H1 (cell line): ENCODE measurements at regions of chr1 and their contacts with region 1.

Region 1: DNA sequence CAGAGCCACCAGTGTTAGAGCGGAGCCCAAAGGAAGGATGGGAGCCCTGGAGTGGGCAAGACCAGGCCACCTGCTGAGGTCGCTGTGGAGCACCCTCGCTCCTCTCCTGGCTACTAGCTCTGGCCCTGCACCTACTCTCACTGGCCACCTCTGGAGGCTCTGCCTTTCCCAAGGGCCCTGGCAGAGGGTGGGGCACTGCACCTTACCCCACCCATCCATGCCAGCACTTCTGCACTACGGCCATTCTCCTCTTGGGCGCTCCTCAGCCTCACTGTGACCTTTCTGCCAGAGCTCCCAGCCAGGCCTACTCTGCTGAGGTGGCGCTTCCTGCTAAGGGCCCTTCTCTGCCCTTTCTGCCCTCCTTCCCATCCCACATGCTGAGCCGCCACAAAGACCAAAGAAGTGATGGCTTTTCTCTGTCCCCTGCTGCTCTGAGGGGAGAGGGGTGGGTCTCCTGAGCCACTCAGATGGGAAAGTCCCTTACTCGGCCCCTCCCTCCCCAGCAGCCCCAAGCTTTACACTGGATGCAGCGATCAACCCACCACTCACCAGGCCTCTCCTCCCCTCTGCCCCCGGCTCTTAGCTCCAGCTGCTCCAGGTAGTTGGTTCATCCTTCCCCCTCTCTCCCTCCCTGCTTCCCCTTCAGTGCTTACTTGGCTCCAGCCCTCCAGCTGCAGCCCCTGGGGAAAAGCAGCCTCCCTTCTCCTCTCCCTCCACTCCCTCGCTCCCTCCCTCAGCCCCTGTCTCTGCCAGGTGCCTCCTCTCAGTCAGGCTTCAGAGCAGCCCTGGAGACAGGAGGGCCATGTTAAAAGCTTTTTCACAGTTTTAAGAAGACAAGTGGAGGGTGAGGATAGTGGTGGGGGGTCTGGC is 14.8 kb upstream of the TMEM222 start:
- DNase-seq: peak in 1 of 2 experiments; percentile 76
- H3K4me3 ChIP-seq: peak overlapping the region in 2 of 4 experiments; percentile 23 to 39; a peak in 4 of 8 replicates
- H3K27ac ChIP-seq: peak overlapping the region; percentile 57; the same call in 1 of the 2 replicates
- H3K4me1 ChIP-seq: peaks cover 11 to 15% (median 13%) of the 10 kb centered on the region in 4 experiments
- H3K27me3 ChIP-seq: no peaks in the 10 kb centered on the region
- CTCF ChIP-seq: peak; percentile 33 to 57 (median 41)
- EP300 ChIP-seq: no peak
- POLR2A ChIP-seq: 0 out of 3 replicates have a peak, but pooled peaks of 1 of the 2 experiments have one; percentile 28
- RAD21 ChIP-seq: 0 out of 4 replicates have a peak, but pooled peaks of 1 of the 2 experiments have one; percentile 12

Region 2: GRCh38 chr1:27166351-27166802 is 140.8 kb before region 1 on chr1:
- CTCF ChIA-PET with region 1: no interaction called
- POLR2A ChIA-PET with region 1: no interaction called
- DNase-seq: no peak
- H3K4me3 ChIP-seq: no peak overlapping the region
- H3K27ac ChIP-seq: no peak overlapping the region
- H3K4me1 ChIP-seq: no peaks in the 10 kb centered on the region
- H3K27me3 ChIP-seq: no peaks in the 10 kb centered on the region
- CTCF ChIP-seq: no peak
- EP300 ChIP-seq: no peak
- POLR2A ChIP-seq: no peak
- RAD21 ChIP-seq: no peak

Region 3: DNA sequence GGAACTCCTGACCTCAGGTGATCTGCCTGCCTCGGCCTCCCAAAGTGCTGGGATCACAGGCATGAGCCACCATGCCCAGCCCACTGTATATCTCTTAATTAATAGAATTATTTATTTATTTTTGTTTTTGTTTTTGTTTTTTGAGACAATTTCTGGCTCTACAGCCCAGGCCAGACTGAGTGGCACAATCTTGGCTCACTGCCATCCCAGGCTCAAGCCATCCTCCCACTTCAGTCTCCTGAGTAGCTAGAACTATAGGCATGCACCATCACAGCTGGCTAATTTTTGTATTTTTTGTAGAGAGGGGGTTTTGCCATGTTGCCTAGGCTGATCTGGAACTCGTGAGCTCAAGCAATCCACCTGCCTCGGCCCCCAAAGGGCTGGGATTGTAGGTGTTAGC is 88.4 kb before region 1 on chr1:
- CTCF ChIA-PET with region 1: no interaction called
- POLR2A ChIA-PET with region 1: no interaction called
- DNase-seq: no peak
- H3K4me3 ChIP-seq: no peak overlapping the region
- H3K27ac ChIP-seq: no peak overlapping the region
- H3K4me1 ChIP-seq: no peaks in the 10 kb centered on the region
- H3K27me3 ChIP-seq: no peaks in the 10 kb centered on the region
- CTCF ChIP-seq: no peak
- EP300 ChIP-seq: no peak
- POLR2A ChIP-seq: no peak
- RAD21 ChIP-seq: no peak

Region 4: GRCh38 chr1:27321813-27322577 is 14.9 kb after region 1 on chr1 and contains the start of gene TMEM222:
- CTCF ChIA-PET with region 1: interaction called, 202 read pairs
- POLR2A ChIA-PET with region 1: interaction called, 12 read pairs
- DNase-seq: peak; percentile 88 to 99
- H3K4me3 ChIP-seq: peak within 1 kb of the TSS; percentile 78 to 100 (median 98)
- H3K27ac ChIP-seq: peak within 1 kb of the TSS; percentile 86
- H3K4me1 ChIP-seq: 0 out of 7 replicates have a peak, but pooled peaks cover 0 to 8% (median 0%) of the 10 kb centered on the region in 4 experiments
- H3K27me3 ChIP-seq: no peaks in the 10 kb centered on the region; a peak in 2 of 7 replicates
- CTCF ChIP-seq: peak in 2 of 3 experiments; percentile 1 to 14; a peak in 2 of 4 replicates
- EP300 ChIP-seq: peak; percentile 16 to 83; a peak in 2 of 3 replicates
- POLR2A ChIP-seq: peak; percentile 69 to 87
- RAD21 ChIP-seq: peak; percentile 7 to 30; a peak in 3 of 4 replicates
- total RNA-seq, gene TMEM222: 25.1 and 27.0 TPM in 2 replicates